Gastrocnemius medialis (tissue), 4 donors: ENCODE measurements at regions of chr17 and their contacts with region 1.

Region 1: DNA sequence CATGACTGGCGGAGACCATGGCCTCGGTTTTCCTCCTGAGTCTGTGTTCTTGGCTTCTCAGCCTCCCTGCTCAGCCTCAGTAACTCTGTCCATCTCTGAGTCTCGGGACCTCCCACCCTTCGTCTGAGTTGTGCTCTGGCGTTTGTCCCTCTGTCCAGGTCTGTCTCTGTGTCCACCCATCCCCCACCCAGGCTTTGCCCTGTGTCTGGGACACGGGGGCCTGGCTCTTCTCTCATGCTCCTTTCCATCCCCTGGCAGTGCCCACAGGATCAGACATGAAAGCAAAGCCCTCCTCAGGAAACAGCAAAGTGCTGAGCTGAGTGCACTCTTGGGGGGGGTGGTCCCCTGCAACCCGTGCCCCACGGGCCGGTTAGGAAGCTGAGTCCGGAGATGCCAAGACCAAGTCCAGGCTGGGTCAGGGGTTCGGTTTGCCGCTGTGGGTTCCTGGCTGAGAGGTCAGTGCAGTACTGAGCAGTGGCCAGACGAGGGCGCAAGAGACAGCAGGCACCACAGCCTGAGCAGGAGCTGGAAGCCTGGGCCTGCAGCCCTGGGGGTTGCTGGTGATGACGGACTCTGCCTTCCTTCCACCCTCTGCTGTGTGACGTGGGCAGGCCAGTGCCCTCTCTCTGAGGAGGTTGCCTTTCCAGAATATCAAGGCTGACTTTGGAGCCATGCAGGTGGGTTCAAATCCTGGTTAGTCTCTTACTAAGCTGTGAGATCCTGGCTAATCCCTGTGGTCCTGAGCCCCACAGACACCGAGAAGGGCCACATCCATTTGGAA is 2.5 kb downstream of the P2RX1 start:
- DNase-seq: peak in 1 of 2 donors; percentile 51
- ATAC-seq: peak; percentile 50 to 79
- H3K4me3 ChIP-seq: no peak overlapping the region
- H3K27ac ChIP-seq: no peak overlapping the region
- H3K4me1 ChIP-seq: peaks cover 3 to 9% of the 10 kb centered on the region in 2 donors
- H3K27me3 ChIP-seq: no peaks in the 10 kb centered on the region
- CTCF ChIP-seq: peak; percentile 87 to 98 (median 95)
- POLR2A ChIP-seq: no peak

Region 2: DNA sequence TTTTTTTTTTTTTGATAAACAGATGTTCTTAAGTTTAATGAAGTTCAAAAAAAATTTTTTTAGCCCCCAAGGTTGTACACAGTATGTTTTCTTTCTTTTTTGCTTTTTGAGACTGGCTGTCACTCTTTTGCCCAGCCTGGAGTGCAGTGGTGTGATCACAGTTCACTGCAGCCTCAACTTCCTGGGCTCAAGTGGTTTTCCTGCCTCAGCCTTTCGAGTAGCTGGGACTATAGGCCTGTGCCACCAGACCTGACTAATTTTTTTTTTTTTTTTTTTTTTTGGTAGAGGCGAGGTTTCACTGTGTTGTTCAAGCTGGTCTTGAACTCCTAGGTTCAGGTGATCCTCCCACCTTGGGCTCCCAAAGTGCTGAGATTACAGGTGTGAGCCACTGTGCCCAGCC is 125.5 kb before region 1 on chr17:
- in situ Hi-C with region 1: no loop called
- intact Hi-C with region 1: no loop called
- DNase-seq: no peak
- ATAC-seq: no peak
- H3K4me3 ChIP-seq: no peak overlapping the region
- H3K27ac ChIP-seq: no peak overlapping the region
- H3K4me1 ChIP-seq: no peaks in the 10 kb centered on the region
- H3K27me3 ChIP-seq: no peaks in the 10 kb centered on the region
- CTCF ChIP-seq: no peak
- POLR2A ChIP-seq: no peak

Region 3: DNA sequence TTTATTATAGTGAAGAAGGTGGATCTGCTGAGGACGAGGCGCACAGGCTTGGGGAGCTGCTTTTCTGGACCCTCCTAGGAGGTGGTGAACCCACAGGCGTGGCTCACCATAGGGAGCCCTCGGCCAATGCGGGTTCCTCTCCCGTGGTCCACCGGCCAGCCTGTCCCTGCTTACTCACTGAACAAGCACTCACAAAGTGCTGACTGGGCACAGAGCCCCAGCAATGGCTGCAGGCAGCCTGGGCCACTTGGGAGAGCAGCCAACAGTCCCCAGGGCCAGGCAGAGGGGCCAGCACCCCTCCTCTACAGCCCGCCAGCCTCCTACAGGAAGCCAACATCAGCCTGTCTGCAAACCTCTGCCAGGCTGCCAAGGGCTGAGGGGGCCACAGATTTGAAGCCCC is 48.5 kb before region 1 on chr17:
- in situ Hi-C with region 1: loop called in 1 of 4 experiments (anchors 10 kb)
- intact Hi-C with region 1: loop called (anchors 2 kb)
- DNase-seq: no peak
- ATAC-seq: no peak
- H3K4me3 ChIP-seq: no peak overlapping the region
- H3K27ac ChIP-seq: no peak overlapping the region
- H3K4me1 ChIP-seq: no peaks in the 10 kb centered on the region
- H3K27me3 ChIP-seq: no peaks in the 10 kb centered on the region
- CTCF ChIP-seq: no peak
- POLR2A ChIP-seq: no peak

Region 4: DNA sequence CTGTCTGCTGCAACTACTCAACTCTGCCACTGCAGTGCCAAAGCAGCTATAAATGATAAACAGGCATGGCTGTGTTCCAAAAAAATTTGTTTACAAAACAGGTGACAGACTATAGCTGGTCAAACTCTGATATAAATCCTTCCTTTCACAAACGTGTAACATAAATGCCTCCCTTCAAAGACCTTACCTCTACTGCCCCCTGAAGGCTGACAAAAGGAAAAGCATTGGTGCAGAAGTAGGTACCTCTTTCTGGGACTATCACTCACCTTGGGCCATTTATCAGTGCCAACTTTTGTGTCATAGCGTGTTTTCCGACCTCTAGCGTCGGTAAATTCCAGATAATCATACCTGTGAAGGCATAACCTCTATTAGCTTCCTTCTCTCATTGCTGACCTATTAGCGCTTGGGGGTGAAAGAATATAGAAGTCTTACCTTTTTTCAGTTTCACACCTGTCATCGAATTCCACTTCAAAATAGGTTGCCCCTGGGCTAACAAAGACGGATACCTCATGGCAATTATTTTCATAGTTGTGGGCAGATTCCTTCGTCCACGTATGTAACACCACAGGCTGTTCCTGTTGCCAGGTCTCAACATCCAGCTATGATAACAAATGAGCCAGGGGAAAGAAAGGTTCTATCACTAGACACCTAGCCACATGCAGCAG is 161.2 kb after region 1 on chr17:
- in situ Hi-C with region 1: no loop called
- intact Hi-C with region 1: loop called (anchors 1 kb)
- DNase-seq: no peak
- ATAC-seq: peak; percentile 17 to 42
- H3K4me3 ChIP-seq: no peak overlapping the region
- H3K27ac ChIP-seq: peak overlapping the region; percentile 83 to 97 (median 86)
- H3K4me1 ChIP-seq: peaks cover 26 to 31% of the 10 kb centered on the region in 2 donors
- H3K27me3 ChIP-seq: no peaks in the 10 kb centered on the region
- CTCF ChIP-seq: peak; percentile 27 to 80 (median 64)
- POLR2A ChIP-seq: no peak

Region 5: GRCh38 chr17:4948931-4949320 is 1035.2 kb after region 1 on chr17:
- in situ Hi-C with region 1: no loop called
- intact Hi-C with region 1: loop called (anchors 5 kb)
- DNase-seq: peak; percentile 71 to 86
- ATAC-seq: peak; percentile 47 to 53
- H3K4me3 ChIP-seq: peak overlapping the region; percentile 85 to 99 (median 96)
- H3K27ac ChIP-seq: peak overlapping the region; percentile 96 to 100 (median 98)
- H3K4me1 ChIP-seq: peaks cover 58 to 64% of the 10 kb centered on the region in 2 donors
- H3K27me3 ChIP-seq: no peaks in the 10 kb centered on the region
- CTCF ChIP-seq: no peak
- POLR2A ChIP-seq: peak; percentile 15 to 78